ENCODE measurements at regions of chr17 and their contacts with region 1.

Region 1: DNA sequence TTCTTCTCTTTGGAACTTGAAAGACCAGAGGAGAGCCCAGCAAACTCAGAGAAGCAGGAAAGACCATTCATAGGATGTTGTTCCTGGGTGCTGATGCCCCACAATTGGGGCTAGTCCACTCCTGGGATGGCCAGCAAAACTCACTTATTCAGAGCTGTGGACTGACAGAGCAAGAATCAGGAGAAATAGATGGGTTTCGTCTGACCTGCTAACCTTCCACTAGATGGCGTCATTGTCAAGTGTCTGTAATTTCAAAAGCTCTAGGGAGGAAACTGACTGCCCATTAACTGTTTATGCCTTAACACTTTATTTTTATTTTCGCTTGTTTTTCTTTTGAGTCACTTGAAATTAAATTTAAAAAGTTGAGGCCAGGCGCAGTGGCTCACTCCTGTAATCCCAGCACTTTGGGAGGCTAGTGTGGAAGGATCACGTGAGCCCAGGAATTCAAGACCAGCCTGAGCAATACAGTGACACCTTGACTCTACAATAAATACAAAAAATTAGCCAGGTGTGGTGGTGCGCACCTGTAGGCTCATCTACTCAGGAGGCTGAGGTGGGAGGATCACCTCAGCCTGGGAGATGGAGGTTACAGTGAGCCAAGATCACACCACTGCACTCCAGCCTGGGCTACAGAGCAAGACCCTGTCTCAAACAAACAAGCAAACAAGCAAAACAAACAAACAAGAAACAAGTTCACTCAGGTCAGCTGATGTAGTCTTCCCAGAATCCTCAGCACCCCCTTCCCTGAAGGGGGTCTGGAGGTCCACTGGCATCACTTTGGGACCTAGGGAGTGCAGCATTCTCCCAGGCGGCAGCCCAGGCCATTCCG is 28.6 kb upstream of the MILR1 start:
- DNase-seq: peak; percentile 71 to 85 (median 81)
- H3K4me3 ChIP-seq: no peak overlapping the region
- H3K4me3 Mint-ChIP-seq: no peak overlapping the region
- H3K27ac ChIP-seq: no peak overlapping the region
- H3K27ac Mint-ChIP-seq: peak overlapping the region in 4 of 7 donors; percentile 15 to 75 (median 36)
- H3K4me1 ChIP-seq: peaks cover 7 to 16% of the 10 kb centered on the region in 2 donors
- H3K4me1 Mint-ChIP-seq: peaks cover 6% of the 10 kb centered on the region
- H3K27me3 ChIP-seq: no peaks in the 10 kb centered on the region
- H3K27me3 Mint-ChIP-seq: peaks cover 0 to 4% (median 0%) of the 10 kb centered on the region in 3 donors
- CTCF ChIP-seq: peak; percentile 72

Region 2: GRCh38 chr17:64306850-64307463 is 113.4 kb before region 1 on chr17:
- intact Hi-C with region 1: loop called (anchors 1 to 5 kb)
- DNase-seq: peak; percentile 73 to 75 (median 75)
- H3K4me3 ChIP-seq: no peak overlapping the region
- H3K4me3 Mint-ChIP-seq: no peak overlapping the region
- H3K27ac ChIP-seq: no peak overlapping the region
- H3K27ac Mint-ChIP-seq: no peak overlapping the region
- H3K4me1 ChIP-seq: peaks cover 12 to 17% of the 10 kb centered on the region in 2 donors
- H3K4me1 Mint-ChIP-seq: peaks cover 24% of the 10 kb centered on the region
- H3K27me3 ChIP-seq: no peaks in the 10 kb centered on the region
- H3K27me3 Mint-ChIP-seq: no peaks in the 10 kb centered on the region
- CTCF ChIP-seq: peak; percentile 88

Region 3: DNA sequence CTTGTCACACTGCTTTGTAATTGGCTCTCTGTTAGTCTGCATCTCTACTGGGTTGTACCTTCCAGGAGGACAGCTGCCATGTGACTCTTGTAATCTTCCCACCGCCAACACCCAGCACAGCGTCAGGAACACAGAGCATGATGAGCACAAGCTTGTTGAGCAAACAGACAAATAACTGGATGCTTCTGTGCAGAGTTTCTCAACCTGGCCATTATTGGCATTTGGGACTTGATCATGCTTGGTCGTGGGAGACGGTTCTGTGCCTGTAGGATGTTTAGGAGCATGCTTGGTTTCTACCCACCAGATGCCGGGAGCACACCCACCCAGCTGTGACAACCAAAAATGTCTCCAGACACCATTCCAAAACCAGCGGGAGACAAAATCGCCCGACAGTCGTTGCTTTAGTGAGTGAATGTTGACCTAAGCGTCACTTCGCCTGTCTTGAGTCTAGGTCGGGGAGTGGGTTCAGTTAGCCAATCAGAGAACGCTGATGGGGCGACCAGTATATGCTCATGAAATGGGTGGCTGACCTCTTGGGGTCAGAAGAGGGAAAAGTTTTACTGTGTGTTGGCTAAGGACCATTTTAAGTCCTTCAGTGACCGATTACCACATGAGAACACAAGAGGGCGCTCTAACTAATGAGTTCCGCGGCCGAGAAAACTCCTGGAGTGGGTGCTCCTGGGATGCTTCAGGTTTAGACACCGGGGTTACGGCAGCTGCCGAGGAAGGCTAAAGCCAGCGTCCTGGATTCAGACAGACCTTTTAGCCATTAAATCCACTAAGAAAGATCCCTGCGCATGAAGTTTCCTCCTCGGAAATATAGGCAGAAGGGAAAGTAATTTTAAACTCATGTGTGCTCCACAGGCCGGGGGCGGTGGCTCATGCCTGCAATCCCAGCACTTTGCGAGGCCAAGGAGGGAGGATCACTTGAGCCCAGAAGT is 99.5 kb before region 1 on chr17:
- intact Hi-C with region 1: loop called (anchors 5 kb)
- DNase-seq: peak; percentile 61 to 83 (median 72)
- H3K4me3 ChIP-seq: no peak overlapping the region
- H3K4me3 Mint-ChIP-seq: peak overlapping the region; percentile 51 to 58
- H3K27ac ChIP-seq: peak overlapping the region in 1 of 2 donors; percentile 52
- H3K27ac Mint-ChIP-seq: peak overlapping the region; percentile 51 to 83 (median 76)
- H3K4me1 ChIP-seq: peaks cover 22 to 59% of the 10 kb centered on the region in 2 donors
- H3K4me1 Mint-ChIP-seq: peaks cover 47% of the 10 kb centered on the region
- H3K27me3 ChIP-seq: no peaks in the 10 kb centered on the region
- H3K27me3 Mint-ChIP-seq: peaks cover 0 to 4% (median 3%) of the 10 kb centered on the region in 3 donors
- CTCF ChIP-seq: peak; percentile 91

Region 4: GRCh38 chr17:64384253-64385186 is 35.8 kb before region 1 on chr17:
- intact Hi-C with region 1: loop called in 1 of 2 experiments (anchors 5 kb)
- DNase-seq: peak in 1 of 3 donors; percentile 20
- H3K4me3 ChIP-seq: peak overlapping the region in 1 of 3 experiments; percentile 35
- H3K4me3 Mint-ChIP-seq: peak overlapping the region; percentile 39 to 53
- H3K27ac ChIP-seq: peak overlapping the region; percentile 64 to 78
- H3K27ac Mint-ChIP-seq: peak overlapping the region; percentile 83 to 93 (median 92)
- H3K4me1 ChIP-seq: peaks cover 68 to 81% of the 10 kb centered on the region in 2 donors
- H3K4me1 Mint-ChIP-seq: peaks cover 82% of the 10 kb centered on the region
- H3K27me3 ChIP-seq: no peaks in the 10 kb centered on the region
- H3K27me3 Mint-ChIP-seq: peaks cover 0 to 3% (median 0%) of the 10 kb centered on the region in 3 donors
- CTCF ChIP-seq: no peak

Region 5: GRCh38 chr17:64459284-64459747 is 39.0 kb after region 1 on chr17:
- intact Hi-C with region 1: loop called (anchors 5 kb)
- DNase-seq: no peak
- H3K4me3 ChIP-seq: no peak overlapping the region
- H3K4me3 Mint-ChIP-seq: no peak overlapping the region
- H3K27ac ChIP-seq: peak overlapping the region in 1 of 2 donors; percentile 42
- H3K27ac Mint-ChIP-seq: peak overlapping the region in 1 of 7 donors; percentile 8
- H3K4me1 ChIP-seq: peaks cover 36 to 43% of the 10 kb centered on the region in 2 donors
- H3K4me1 Mint-ChIP-seq: peaks cover 37% of the 10 kb centered on the region
- H3K27me3 ChIP-seq: no peaks in the 10 kb centered on the region
- H3K27me3 Mint-ChIP-seq: no peaks in the 10 kb centered on the region
- CTCF ChIP-seq: no peak

Region 6: DNA sequence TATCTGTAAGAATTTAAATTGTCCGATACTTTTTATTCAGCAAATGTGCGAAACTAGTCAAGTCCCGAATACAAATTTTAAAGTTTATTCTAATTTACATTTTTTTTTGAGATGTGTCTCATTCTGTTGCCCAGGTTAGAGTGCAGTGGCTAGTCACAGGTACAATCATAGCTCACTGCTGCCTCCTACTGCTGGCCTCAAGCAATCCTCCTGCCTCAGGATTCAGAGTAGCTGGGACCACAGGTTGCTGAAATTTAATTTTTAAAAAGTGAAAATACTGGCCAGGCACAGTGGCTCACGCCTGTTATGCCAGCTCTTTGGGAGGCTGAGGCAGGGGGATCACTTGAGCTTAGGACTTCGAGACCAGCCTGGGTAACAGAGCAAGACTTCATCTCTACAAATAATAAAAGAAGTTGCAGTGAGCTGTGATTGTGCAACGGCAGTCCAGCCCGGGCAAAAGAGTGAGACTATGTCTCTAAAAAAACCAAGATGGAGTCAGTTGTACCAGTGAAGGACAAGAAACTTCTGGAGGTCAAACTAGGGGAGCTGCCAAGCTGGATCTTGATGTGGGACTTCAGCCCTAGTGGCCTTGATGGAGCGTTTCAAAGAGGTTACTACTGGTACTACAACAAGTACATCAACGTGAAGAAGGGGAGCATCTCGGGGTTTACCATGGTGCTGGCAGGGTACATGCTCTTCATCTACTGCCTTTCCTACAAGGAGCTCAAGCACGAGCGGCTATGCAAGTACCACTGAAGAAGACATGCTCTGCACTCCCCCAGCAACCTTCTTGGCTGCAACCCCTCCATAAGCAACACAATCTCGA is 70.9 kb after region 1 on chr17:
- intact Hi-C with region 1: loop called (anchors 2 kb)
- DNase-seq: peak in 2 of 3 donors; percentile 60 to 62
- H3K4me3 ChIP-seq: no peak overlapping the region
- H3K4me3 Mint-ChIP-seq: no peak overlapping the region
- H3K27ac ChIP-seq: peak overlapping the region in 1 of 2 donors; percentile 33
- H3K27ac Mint-ChIP-seq: peak overlapping the region in 6 of 7 donors; percentile 40 to 71 (median 70)
- H3K4me1 ChIP-seq: peaks cover 29 to 31% of the 10 kb centered on the region in 2 donors
- H3K4me1 Mint-ChIP-seq: peaks cover 30% of the 10 kb centered on the region
- H3K27me3 ChIP-seq: no peaks in the 10 kb centered on the region
- H3K27me3 Mint-ChIP-seq: peaks cover 0 to 1% (median 0%) of the 10 kb centered on the region in 3 donors
- CTCF ChIP-seq: peak; percentile 91